ENCODE measurements at regions of chr1 and their contacts with region 1.

Region 1: DNA sequence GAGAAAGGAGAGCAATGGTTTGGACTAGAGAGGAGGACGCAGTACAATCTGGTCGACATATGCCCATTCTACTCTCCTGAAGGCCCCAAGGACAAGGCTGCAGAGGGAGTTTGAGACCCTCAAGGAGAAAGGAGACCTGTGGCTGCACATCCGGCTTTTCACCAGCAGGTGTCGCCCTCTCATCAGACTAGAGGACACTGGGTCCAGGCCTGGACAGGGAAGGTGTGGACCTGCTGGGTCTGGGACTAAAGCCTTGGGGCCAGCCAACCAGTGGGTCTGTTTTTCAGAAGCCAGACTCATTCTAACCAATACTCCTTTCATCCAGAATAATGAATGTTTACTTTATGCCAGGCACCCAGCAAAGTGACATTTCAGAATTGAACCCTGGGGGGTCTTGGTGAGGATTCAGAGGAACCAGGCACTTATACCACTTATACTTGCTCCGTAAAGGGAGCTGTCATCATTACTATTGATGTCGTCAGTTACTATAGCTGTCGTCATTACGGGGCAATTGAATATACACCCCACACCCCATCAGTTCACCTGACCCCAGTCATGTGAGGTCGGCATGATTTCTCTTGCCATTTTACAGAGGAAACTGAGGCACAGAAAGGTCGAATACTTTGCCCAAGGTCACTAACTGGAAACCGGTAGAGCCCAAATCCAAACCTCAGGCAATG is 5.1 kb downstream of the SRARP start:
- DNase-seq: peak; percentile 43 to 69
- H3K4me3 ChIP-seq: no peak overlapping the region
- H3K27ac ChIP-seq: no peak overlapping the region
- H3K4me1 ChIP-seq: peaks cover 5% of the 10 kb centered on the region; the same call in 1 of the 2 replicates
- H3K27me3 ChIP-seq: no peaks in the 10 kb centered on the region
- CTCF ChIP-seq: peak; percentile 94

Region 2: GRCh38 chr1:15400627-15401026 is 608.5 kb before region 1 on chr1:
- CTCF ChIA-PET with region 1: no interaction called
- POLR2A ChIA-PET with region 1: no interaction called
- intact Hi-C with region 1: no loop called
- DNase-seq: no peak
- H3K4me3 ChIP-seq: no peak overlapping the region
- H3K27ac ChIP-seq: no peak overlapping the region
- H3K4me1 ChIP-seq: no peaks in the 10 kb centered on the region
- H3K27me3 ChIP-seq: no peaks in the 10 kb centered on the region
- CTCF ChIP-seq: no peak

Region 3: DNA sequence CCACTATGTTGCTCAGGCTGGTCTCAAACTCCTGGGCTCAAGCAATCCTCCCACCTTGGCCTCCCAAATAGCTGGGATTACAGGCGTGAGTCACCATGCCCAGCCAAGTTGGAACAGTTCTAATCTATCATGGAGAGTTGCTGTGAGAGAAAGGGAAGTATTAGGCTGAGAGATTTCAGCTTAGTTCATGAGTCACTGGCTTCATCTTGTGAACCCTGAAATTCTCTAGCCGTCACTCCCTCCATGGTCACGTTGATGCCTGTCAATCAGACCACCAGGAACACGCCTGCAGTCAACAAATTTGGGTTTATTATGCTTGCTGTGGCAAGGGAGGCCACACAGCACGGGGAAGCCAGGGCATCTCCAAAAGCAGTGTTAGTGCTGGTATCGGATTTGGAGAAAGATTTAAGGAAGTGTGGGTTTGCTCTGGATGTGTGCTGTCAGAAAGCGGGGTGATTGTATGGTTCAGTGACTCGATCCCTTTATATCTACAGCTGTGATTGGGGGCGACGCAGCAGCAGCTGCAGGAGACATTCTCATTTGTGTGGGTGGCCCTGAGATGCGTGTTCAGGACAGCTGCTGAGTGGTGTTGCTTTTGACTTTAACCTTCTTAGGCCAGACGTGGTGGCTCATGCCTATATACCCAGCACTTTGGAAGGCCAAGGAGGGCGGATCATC is 220.4 kb before region 1 on chr1:
- CTCF ChIA-PET with region 1: no interaction called
- POLR2A ChIA-PET with region 1: no interaction called
- intact Hi-C with region 1: loop called (anchors 2 kb)
- DNase-seq: peak in 1 of 2 experiments; percentile 53
- H3K4me3 ChIP-seq: no peak overlapping the region
- H3K27ac ChIP-seq: peak overlapping the region; percentile 74
- H3K4me1 ChIP-seq: peaks cover 36% of the 10 kb centered on the region
- H3K27me3 ChIP-seq: no peaks in the 10 kb centered on the region
- CTCF ChIP-seq: no peak

Region 4: DNA sequence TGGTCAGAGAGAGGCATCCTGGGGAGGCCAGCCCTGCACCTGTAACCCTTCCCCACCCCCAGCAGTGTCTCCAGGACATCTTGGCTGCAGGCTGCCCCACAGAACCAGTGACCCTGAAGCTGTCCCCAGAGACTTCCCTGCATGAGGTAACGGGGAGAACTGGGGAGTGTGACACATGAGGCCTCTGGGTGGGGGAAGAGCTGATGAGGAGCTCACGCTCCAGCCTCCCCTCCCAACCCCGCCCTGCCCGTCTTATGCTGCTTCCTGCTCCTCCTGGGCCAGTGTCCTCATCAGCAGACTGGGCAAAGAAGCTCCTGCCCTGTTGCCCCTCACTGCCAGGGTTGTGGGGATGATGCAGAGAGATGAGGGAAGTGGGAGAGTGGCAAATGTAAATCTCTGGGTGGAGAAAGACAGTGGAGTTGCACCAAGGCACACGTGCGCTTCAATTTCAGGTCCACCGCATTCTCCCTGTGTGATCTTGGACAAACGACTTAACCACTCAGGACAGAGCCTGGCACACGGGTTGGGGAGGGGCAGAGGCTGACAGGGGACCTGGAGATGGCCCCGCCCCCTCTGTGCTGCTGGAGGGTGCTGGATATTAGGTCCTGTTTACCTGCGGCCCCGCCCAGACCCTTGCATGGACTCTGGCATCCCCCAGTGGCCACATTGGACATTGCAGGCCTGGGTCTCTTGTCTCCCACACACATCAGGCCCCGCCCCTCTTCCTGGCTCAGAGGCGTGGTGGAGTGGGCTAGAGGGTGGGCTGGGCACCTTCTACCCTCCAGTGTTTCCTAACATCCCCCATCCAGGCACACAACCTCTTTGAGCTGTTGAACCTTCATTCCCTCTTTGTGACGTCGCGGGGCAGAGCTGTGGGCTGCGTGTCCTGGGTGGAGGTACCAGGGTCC is 46.7 kb after region 1 on chr1:
- CTCF ChIA-PET with region 1: interaction called, 10 read pairs
- POLR2A ChIA-PET with region 1: no interaction called
- intact Hi-C with region 1: loop called (anchors 1 kb)
- DNase-seq: peak; percentile 87 to 93
- H3K4me3 ChIP-seq: no peak overlapping the region
- H3K27ac ChIP-seq: peak overlapping the region; percentile 21; the same call in 1 of the 2 replicates
- H3K4me1 ChIP-seq: peaks cover 30% of the 10 kb centered on the region
- H3K27me3 ChIP-seq: no peaks in the 10 kb centered on the region
- CTCF ChIP-seq: peak; percentile 99

Region 5: DNA sequence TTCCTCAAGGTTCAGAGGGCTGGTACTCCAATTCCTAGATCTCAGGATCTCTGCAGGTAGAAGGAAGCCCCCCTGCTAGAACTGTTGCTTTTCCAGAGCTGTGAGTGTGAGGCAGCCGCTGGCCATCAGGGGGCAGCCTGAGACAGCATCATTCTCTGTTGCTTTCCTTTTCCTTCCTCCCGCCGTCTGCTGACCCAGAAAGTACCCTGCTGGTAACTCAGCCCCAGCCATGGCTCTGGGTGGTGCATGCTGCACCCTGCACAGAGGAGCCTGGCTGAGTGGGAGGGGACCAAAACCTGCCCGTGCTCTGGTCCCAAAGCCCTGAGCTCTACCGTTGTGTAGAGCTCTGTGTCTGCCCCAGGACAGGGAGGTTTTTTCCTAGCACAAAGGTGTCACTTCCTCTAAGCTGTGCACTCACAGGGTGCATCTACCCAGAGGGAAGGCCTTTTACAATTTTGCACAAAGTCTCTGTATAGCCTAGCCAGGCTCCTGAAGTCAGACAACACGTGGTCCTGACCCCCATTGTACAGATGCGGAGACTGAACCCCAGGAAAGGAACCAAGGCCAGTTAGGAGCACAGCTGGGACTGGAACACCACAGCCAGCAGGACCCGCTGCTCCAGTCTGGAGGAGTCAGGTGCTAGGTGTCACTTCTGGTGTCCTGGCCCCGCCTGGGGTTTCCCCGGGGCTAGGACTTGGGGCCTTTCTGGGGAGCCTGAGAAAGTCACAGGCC is 69.9 kb after region 1 on chr1:
- CTCF ChIA-PET with region 1: no interaction called
- POLR2A ChIA-PET with region 1: no interaction called
- intact Hi-C with region 1: loop called (anchors 1 kb)
- DNase-seq: peak; percentile 67 to 82
- H3K4me3 ChIP-seq: no peak overlapping the region
- H3K27ac ChIP-seq: peak overlapping the region; percentile 20; the same call in 1 of the 2 replicates
- H3K4me1 ChIP-seq: peaks cover 63% of the 10 kb centered on the region
- H3K27me3 ChIP-seq: no peaks in the 10 kb centered on the region
- CTCF ChIP-seq: peak; percentile 92

Region 6: DNA sequence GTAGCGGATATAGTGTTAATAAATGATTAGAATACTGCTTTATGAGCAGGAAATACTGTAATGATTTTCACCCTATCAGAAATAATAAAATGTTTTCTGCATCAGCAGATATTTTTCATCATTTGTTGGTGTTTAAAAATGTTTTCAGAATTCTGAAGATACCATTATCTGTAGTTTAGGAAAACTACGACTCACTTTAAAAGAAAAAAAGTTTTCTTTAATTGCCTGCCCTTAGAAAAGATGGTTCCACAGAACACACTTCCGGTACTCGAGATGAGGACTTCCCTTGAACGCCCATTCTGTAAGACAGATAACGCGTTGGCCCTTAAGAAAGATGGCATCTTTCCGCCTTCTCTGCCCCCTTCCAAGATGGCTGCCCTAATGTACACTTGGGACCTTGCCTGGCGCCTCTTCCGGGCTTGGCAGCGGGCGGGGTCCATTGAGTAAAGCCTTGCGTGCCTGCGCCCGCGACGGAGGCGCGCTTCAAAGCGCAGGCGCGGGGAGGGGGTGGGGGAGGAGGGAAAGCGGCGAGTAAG is 357.6 kb after region 1 on chr1 and contains the start of gene SZRD1:
- CTCF ChIA-PET with region 1: interaction called, 5 read pairs
- POLR2A ChIA-PET with region 1: no interaction called
- intact Hi-C with region 1: loop called (anchors 5 kb)
- DNase-seq: peak; percentile 92
- H3K4me3 ChIP-seq: peak within 1 kb of the TSS; percentile 59
- H3K27ac ChIP-seq: peak within 1 kb of the TSS; percentile 74
- H3K4me1 ChIP-seq: 0 out of 2 replicates have a peak, but pooled peaks cover 7% of the 10 kb centered on the region
- H3K27me3 ChIP-seq: no peaks in the 10 kb centered on the region
- CTCF ChIP-seq: no peak
- total RNA-seq, gene SZRD1: 104 and 114 TPM in 2 replicates